Heart left ventricle (tissue), 16 donors: ENCODE measurements at regions of chr4 and their contacts with region 1.

Region 1: GRCh38 chr4:54709401-54709800 is 51.6 kb downstream of the KIT start:
- DNase-seq: no peak
- ATAC-seq: peak in 1 of 4 donors; percentile 55
- H3K4me3 ChIP-seq: no peak overlapping the region
- H3K27ac ChIP-seq: no peak overlapping the region
- H3K4me1 ChIP-seq: peaks cover 0 to 12% (median 0%) of the 10 kb centered on the region in 12 donors
- H3K27me3 ChIP-seq: no peaks in the 10 kb centered on the region
- CTCF ChIP-seq: no peak
- POLR2A ChIP-seq: no peak

Region 2: GRCh38 chr4:54658252-54659093 is 50.9 kb before region 1 on chr4:
- intact Hi-C with region 1: no loop called
- DNase-seq: peak; percentile 46 to 75 (median 53)
- ATAC-seq: peak; percentile 34 to 84 (median 82)
- H3K4me3 ChIP-seq: peak overlapping the region; percentile 27 to 75 (median 62)
- H3K27ac ChIP-seq: peak overlapping the region in 8 of 12 donors; percentile 22 to 60 (median 34)
- H3K4me1 ChIP-seq: peaks cover 0 to 33% (median 28%) of the 10 kb centered on the region in 12 donors
- H3K27me3 ChIP-seq: peaks cover 0 to 38% (median 0%) of the 10 kb centered on the region in 9 donors
- CTCF ChIP-seq: peak in 10 of 12 donors; percentile 17 to 60 (median 32)
- POLR2A ChIP-seq: no peak

Region 3: DNA sequence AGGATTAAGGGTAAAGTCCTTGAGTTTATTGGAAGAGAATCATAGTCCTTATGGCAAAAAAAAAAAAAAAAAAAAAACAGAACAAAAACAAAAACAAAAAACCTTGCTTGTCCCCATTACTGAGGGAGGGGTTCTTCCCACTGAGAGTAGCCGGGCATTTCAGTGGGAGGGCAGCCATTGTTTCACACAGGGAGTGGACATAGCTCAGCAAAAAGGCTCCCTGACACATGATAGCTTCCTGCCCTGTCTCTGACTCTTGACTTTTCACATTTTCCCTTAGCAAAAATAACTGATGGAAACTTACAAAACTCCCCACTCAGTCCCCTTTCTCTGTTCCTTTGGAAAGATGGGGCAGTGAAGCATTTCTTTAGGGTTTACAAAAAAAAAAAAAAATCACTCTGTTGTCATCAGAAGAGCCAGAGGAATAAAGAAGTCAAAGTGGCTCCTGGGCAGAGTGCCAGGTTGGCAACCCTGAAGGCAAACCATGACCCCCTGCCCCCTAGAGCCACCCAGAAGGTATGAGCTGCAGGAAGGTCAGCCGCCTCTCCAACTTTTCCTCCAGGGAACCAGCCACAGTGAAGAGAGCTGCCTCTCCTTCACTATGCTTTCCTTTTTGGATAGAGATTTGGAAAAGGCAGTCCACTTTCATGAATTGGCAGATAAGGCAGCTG is 245.4 kb after region 1 on chr4:
- intact Hi-C with region 1: loop called in 1 of 10 experiments (anchors 5 kb)
- DNase-seq: peak in 1 of 5 donors; percentile 10
- ATAC-seq: peak in 3 of 4 donors; percentile 31 to 63 (median 49)
- H3K4me3 ChIP-seq: no peak overlapping the region
- H3K27ac ChIP-seq: no peak overlapping the region
- H3K4me1 ChIP-seq: peaks cover 0 to 17% (median 10%) of the 10 kb centered on the region in 12 donors
- H3K27me3 ChIP-seq: no peaks in the 10 kb centered on the region
- CTCF ChIP-seq: no peak
- POLR2A ChIP-seq: no peak